ENCODE measurements at regions of chr17 and their contacts with region 1.

Region 1: DNA sequence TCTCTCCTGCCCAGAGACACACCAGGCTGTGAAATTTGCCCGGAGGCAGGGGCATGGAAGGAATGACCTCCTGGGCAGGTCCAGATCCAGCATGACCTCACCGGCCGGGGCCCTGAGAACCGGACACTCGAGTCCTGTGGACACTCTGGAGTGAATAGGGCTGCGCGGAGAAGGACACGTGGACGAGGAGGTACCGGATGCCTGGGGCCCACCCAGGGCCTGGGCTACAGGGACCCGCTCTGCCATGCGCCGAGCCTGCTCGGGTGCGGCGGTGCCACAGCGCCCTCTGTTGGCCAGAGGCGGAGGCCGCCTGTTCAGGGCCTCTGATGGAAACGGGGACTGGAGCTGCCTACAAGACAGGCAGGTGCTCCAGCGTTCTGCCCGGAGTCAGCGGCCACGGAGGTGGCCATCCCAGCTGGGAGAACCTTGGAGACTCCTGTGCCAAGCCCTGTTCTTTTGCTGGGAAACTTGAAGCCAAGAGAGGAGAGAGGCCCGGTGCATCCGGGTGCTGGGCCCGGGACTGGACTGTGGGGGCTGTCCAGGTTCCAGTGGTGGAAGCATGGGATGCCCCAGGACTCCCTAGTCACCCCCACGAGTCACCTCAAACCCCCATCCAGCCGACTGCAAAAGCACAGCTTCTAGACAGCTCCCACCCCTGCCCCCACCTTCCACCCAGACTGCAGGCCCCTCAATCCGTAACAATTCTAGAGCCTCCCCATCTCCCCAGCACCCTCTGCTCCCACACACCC is 19.3 kb upstream of the NXPH3 start:
- DNase-seq: peak; percentile 73 to 78 (median 73)
- ATAC-seq: peak; percentile 79 to 87 (median 83)
- H3K4me3 ChIP-seq: no peak overlapping the region
- H3K27ac ChIP-seq: no peak overlapping the region
- H3K4me1 ChIP-seq: peaks cover 0 to 11% (median 2%) of the 10 kb centered on the region in 4 donors
- H3K27me3 ChIP-seq: no peaks in the 10 kb centered on the region
- CTCF ChIP-seq: peak; percentile 93 to 100 (median 99)
- POLR2A ChIP-seq: no peak

Region 2: DNA sequence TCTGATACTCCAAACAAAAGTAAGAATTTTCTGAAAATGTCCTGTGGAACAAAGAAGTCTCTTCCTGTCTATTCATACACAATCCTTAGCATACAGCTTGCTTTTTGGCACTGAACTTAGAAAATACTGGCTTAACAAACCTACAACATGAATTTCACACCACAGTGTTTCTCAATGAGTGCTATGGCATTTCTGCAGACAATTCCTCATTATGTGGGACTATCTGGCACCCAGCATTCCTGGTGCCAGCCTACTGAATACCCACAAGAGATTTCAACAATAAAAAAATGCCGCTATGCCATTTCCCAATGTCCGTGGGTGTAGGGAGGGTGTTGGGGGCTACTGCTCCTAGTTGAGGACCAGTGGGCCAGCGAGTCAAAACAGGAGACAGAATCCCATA is 256.4 kb before region 1 on chr17:
- intact Hi-C with region 1: loop called in 1 of 2 experiments (anchors 10 kb)
- DNase-seq: no peak
- ATAC-seq: no peak
- H3K4me3 ChIP-seq: no peak overlapping the region
- H3K27ac ChIP-seq: no peak overlapping the region
- H3K4me1 ChIP-seq: no peaks in the 10 kb centered on the region
- H3K27me3 ChIP-seq: no peaks in the 10 kb centered on the region
- CTCF ChIP-seq: no peak
- POLR2A ChIP-seq: no peak

Region 3: DNA sequence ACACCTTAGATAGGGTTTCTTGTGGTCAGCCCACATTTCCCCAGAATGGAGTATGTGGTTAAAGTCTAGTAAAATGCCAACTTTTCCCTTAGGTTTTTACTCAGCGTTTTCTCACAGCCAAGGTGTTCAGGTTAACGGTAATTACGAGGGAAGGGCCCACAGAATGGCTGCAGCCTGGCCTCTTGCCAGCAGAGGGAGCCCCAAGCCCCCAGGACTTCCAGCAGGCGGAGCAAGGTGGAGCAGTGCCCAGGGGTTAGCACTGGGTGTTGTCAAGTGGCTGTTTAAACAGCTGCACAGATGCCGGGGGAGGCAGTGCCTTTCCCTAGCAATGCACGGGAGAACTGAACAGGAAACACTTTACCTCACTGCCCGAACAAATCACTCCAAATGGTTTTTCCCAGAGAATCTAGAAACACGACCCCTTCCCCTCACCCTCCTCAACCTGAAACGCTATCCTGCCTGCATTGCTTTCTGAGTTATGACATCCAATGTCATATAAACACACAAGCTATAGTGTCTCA is 148.4 kb before region 1 on chr17:
- intact Hi-C with region 1: no loop called
- DNase-seq: peak; percentile 67 to 75 (median 69)
- ATAC-seq: peak; percentile 55 to 73 (median 72)
- H3K4me3 ChIP-seq: no peak overlapping the region
- H3K27ac ChIP-seq: no peak overlapping the region
- H3K4me1 ChIP-seq: no peaks in the 10 kb centered on the region
- H3K27me3 ChIP-seq: no peaks in the 10 kb centered on the region
- CTCF ChIP-seq: peak; percentile 44 to 69 (median 58)
- POLR2A ChIP-seq: no peak

Region 4: DNA sequence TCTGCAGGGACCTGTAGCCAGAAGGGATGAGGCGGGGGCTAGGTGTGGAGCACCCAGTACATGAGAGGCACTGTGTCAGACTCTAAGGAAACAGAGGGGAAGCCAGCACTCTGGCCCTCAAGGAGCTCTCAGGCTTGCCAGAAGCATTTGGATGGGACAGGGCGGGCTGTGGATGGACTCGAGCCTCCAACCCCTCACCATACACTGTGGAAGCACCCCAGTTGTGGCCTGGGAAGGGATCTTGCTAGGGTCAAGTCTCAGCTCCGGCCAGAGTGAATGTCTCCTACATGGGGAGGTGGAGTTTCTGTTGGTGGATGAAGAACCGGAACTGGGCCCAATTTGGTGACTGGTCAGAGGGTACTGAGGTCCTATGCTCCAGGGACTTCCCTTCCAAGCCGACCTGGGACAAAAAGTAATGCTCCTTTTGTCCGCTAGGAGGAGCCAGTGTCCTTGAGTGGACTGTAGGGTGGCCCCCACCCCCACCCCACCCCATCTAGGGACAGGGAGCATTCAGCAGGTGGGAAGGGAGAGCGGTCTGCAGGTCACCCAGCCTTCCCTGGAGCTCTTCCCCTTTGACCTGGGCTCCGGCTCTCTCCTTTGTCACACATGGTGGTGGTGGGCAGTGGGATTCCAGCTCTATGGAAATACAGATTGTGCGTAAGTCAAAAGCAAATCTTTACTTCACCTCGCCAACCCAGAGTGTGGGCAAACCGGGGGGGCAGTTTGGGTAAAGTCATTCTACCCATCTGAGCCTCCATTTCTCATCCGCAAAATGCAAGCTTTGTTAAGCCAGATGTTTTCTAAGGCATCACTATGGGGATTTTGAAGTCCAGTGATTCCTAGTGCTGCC is 121.4 kb before region 1 on chr17:
- intact Hi-C with region 1: loop called in 1 of 2 experiments (anchors 5 kb)
- DNase-seq: no peak
- ATAC-seq: peak; percentile 41 to 67 (median 51)
- H3K4me3 ChIP-seq: no peak overlapping the region
- H3K27ac ChIP-seq: no peak overlapping the region
- H3K4me1 ChIP-seq: peaks cover 0 to 9% (median 0%) of the 10 kb centered on the region in 4 donors
- H3K27me3 ChIP-seq: no peaks in the 10 kb centered on the region
- CTCF ChIP-seq: peak in 3 of 4 donors; percentile 58 to 63 (median 59)
- POLR2A ChIP-seq: no peak

Region 5: GRCh38 chr17:49494937-49495841 is 61.2 kb before region 1 on chr17 and contains the start of gene NGFR:
- intact Hi-C with region 1: loop called (anchors 5 kb)
- DNase-seq: no peak
- ATAC-seq: peak; percentile 33 to 69 (median 63)
- H3K4me3 ChIP-seq: peak within 1 kb of the TSS; percentile 34 to 53 (median 35)
- H3K27ac ChIP-seq: no peak within 1 kb of the TSS
- H3K4me1 ChIP-seq: peaks cover 0 to 25% (median 4%) of the 10 kb centered on the region in 4 donors
- H3K27me3 ChIP-seq: peaks cover 5 to 23% of the 10 kb centered on the region in 2 donors
- CTCF ChIP-seq: peak in 1 of 4 donors; percentile 26
- POLR2A ChIP-seq: peak; percentile 46
- total RNA-seq, gene NGFR: 3.1 to 9.4 (median 6.8) TPM

Region 6: DNA sequence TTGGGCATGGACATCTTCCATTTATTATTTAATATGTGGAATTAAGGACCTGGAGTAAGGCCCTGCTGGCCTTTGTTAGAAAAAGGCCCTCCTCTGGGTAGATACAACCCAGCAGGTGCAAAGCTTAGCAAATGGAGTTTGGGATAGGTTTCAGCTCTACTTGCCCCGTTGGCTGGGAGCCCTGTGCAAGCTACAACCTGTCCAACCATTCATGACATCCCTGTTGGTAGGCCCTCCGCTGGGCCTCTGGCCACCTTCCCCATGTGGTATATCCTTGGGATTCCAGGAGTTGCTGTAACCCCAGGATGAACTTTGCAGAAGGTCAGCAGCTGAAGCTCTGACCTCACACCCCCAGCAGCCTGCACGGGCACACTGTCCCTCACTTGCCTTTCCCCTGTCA is 54.9 kb before region 1 on chr17:
- intact Hi-C with region 1: loop called in 1 of 2 experiments (anchors 5 kb)
- DNase-seq: no peak
- ATAC-seq: no peak
- H3K4me3 ChIP-seq: no peak overlapping the region
- H3K27ac ChIP-seq: no peak overlapping the region
- H3K4me1 ChIP-seq: peaks cover 0 to 13% (median 0%) of the 10 kb centered on the region in 4 donors
- H3K27me3 ChIP-seq: peaks cover 5 to 18% of the 10 kb centered on the region in 2 donors
- CTCF ChIP-seq: no peak
- POLR2A ChIP-seq: no peak

Region 7: DNA sequence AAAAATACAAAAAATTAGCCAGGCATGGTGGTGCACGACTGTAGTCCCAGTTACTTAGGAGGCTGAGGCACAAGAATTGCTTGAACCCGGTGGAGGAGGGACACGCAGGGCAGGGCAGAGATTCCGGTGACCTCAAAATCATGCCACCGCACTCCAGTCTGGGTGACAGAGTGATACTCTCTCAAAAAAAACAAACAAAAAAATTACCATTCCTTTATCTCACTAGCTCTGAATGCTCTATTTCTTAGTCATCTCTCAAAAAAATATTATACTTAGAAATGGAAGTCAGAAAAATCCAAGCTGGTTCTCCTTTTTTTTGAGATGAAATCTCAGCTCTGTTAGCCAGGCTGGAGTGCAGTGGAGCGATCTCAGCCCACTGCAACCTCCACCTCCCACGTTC is 80.7 kb after region 1 on chr17:
- intact Hi-C with region 1: no loop called
- DNase-seq: no peak
- ATAC-seq: no peak
- H3K4me3 ChIP-seq: no peak overlapping the region
- H3K27ac ChIP-seq: no peak overlapping the region
- H3K4me1 ChIP-seq: peaks cover 0 to 42% (median 15%) of the 10 kb centered on the region in 4 donors
- H3K27me3 ChIP-seq: no peaks in the 10 kb centered on the region
- CTCF ChIP-seq: no peak
- POLR2A ChIP-seq: no peak

Region 8: DNA sequence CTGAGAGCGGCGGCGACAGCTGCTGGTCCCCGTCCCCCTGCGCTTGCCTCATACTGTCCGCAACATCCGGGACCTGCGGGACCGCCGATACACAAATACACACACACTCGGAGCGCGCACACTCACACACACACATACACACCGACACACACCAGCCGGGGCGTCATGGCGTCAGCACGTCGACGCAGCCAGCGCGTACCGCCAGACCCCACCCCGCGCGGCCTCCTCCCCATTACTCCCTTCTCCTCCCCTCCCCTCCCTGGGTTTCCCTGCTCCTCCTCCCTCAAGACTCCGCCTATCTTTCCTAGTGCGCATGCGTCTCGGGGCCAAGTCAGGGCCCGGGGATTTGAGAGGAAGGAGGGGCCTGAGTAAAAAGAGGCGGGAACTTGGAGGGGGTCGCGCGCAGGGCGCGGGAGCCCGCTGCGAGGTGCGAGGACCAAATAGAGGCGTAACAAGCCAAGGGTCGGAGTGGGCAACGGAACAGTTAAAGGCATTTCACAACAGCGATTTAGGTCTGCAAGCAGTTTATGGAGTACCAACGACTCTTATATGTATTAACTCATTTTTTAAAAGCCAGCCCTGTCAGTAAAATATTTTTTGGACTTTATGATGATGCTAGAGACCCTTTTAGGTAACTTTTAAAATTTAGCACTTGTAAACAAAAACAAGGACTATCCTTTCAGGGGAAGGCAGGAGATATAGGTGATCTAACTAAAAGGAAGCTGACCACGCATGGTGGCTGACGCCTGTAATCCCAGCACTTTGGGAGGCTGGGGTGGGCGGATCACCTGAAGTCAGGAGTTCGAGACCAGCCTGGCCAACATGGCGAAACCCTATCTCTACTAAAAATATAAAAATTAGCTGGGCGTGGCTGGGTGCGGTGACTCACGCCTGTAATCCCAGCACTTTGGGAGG is 121.8 kb after region 1 on chr17 and contains the start of gene SPOP:
- intact Hi-C with region 1: no loop called
- DNase-seq: peak; percentile 99 to 100 (median 100)
- ATAC-seq: peak; percentile 98 to 99 (median 98)
- H3K4me3 ChIP-seq: peak within 1 kb of the TSS; percentile 66 to 72 (median 68)
- H3K27ac ChIP-seq: peak within 1 kb of the TSS; percentile 91 to 95 (median 94)
- H3K4me1 ChIP-seq: peaks cover 0 to 32% (median 9%) of the 10 kb centered on the region in 4 donors
- H3K27me3 ChIP-seq: no peaks in the 10 kb centered on the region
- CTCF ChIP-seq: no peak
- POLR2A ChIP-seq: peak; percentile 32
- total RNA-seq, gene SPOP: 26.9 to 41.0 (median 34.1) TPM

Region 9: GRCh38 chr17:49691086-49691676 is 134.8 kb after region 1 on chr17:
- intact Hi-C with region 1: no loop called
- DNase-seq: no peak
- ATAC-seq: peak in 1 of 4 donors; percentile 20
- H3K4me3 ChIP-seq: no peak overlapping the region
- H3K27ac ChIP-seq: no peak overlapping the region
- H3K4me1 ChIP-seq: peaks cover 0 to 7% (median 0%) of the 10 kb centered on the region in 4 donors
- H3K27me3 ChIP-seq: peaks cover 0 to 3% of the 10 kb centered on the region in 2 donors
- CTCF ChIP-seq: no peak
- POLR2A ChIP-seq: no peak